Caco-2 (cell line): ENCODE measurements at regions of chr7 and their contacts with region 1.

Region 1: GRCh38 chr7:114138587-114138986 is 219.8 kb upstream of the PPP1R3A start:
- DNase-seq: no peak
- H3K4me3 ChIP-seq: no peak overlapping the region
- H3K4me3 Mint-ChIP-seq: no peak overlapping the region
- H3K27ac Mint-ChIP-seq: no peak overlapping the region
- H3K4me1 ChIP-seq: no peaks in the 10 kb centered on the region
- H3K4me1 Mint-ChIP-seq: no peaks in the 10 kb centered on the region
- H3K27me3 ChIP-seq: no peaks in the 10 kb centered on the region
- H3K27me3 Mint-ChIP-seq: peaks cover 3% of the 10 kb centered on the region
- CTCF ChIP-seq: no peak

Region 2: GRCh38 chr7:113636727-113637421 is 501.7 kb before region 1 on chr7:
- CTCF ChIA-PET with region 1: no interaction called
- POLR2A ChIA-PET with region 1: no interaction called
- intact Hi-C with region 1: no loop called
- DNase-seq: no peak
- H3K4me3 ChIP-seq: no peak overlapping the region
- H3K4me3 Mint-ChIP-seq: no peak overlapping the region
- H3K27ac Mint-ChIP-seq: no peak overlapping the region
- H3K4me1 ChIP-seq: no peaks in the 10 kb centered on the region
- H3K4me1 Mint-ChIP-seq: no peaks in the 10 kb centered on the region
- H3K27me3 ChIP-seq: no peaks in the 10 kb centered on the region
- H3K27me3 Mint-ChIP-seq: no peaks in the 10 kb centered on the region
- CTCF ChIP-seq: no peak

Region 3: DNA sequence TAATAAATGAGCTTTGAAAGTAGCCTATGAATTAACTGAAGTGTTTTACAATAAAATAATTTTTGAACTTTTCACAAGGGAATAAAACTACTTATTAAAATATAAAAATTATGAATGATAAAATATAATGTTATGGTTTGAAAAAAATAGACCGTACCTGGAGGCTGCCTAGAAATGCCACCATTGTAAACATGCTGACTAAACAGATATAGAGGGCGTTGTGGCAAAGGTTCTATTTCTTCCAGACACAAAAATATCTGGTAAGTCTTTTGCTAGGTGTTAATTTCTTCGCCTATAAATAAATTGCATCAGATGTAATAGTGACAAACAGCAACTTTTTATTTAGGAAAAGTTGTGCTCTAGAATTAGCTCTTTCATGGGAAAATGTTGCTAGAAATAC is 231.0 kb before region 1 on chr7:
- CTCF ChIA-PET with region 1: no interaction called
- POLR2A ChIA-PET with region 1: no interaction called
- intact Hi-C with region 1: no loop called
- DNase-seq: no peak
- H3K4me3 ChIP-seq: no peak overlapping the region
- H3K4me3 Mint-ChIP-seq: no peak overlapping the region
- H3K27ac Mint-ChIP-seq: no peak overlapping the region
- H3K4me1 ChIP-seq: no peaks in the 10 kb centered on the region
- H3K4me1 Mint-ChIP-seq: no peaks in the 10 kb centered on the region
- H3K27me3 ChIP-seq: no peaks in the 10 kb centered on the region
- H3K27me3 Mint-ChIP-seq: no peaks in the 10 kb centered on the region
- CTCF ChIP-seq: no peak

Region 4: DNA sequence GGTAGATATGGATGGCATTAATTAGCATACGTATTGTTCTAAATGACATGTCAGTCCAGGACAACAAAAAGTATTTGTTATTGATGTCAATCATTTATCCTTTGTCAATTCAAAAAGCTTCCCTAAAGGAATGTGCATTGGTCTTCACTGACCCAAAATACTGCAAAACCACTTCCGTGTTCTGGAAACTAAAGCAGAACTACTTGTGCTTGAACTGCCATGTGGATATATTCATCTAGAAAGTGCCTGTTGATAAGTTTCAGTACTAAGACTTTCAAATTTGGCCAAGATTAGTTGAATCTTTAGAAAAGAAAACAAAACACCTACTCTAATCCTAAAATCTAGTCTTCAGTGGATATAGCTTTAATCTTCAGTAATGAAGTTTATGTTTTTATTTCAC is 22.3 kb after region 1 on chr7:
- CTCF ChIA-PET with region 1: no interaction called
- POLR2A ChIA-PET with region 1: no interaction called
- intact Hi-C with region 1: no loop called
- DNase-seq: no peak
- H3K4me3 ChIP-seq: no peak overlapping the region
- H3K4me3 Mint-ChIP-seq: no peak overlapping the region
- H3K27ac Mint-ChIP-seq: no peak overlapping the region
- H3K4me1 ChIP-seq: no peaks in the 10 kb centered on the region
- H3K4me1 Mint-ChIP-seq: no peaks in the 10 kb centered on the region
- H3K27me3 ChIP-seq: no peaks in the 10 kb centered on the region
- H3K27me3 Mint-ChIP-seq: no peaks in the 10 kb centered on the region
- CTCF ChIP-seq: no peak

Region 5: DNA sequence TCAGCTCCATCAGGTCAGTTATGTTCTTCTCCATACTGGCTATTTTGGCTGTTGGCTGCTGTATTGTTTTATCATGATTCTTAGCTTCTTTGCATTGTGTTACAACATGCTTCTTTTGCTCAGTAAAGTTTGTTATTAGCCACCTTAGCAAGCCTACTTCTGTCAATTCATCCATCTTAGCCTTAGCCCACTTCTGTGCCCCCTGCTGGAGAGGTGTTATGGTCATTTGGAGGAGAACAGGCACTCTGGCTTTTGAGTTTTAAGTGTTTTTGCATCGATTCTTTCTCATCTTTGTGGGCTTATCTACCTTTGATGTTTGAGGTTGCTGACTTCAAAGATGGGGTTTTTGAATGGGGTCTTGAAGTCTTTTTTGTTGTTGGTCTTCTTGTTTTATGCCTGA is 71.4 kb after region 1 on chr7:
- CTCF ChIA-PET with region 1: no interaction called
- POLR2A ChIA-PET with region 1: no interaction called
- intact Hi-C with region 1: loop called (anchors 5 kb)
- DNase-seq: peak in 1 of 2 experiments; percentile 4
- H3K4me3 ChIP-seq: no peak overlapping the region
- H3K4me3 Mint-ChIP-seq: no peak overlapping the region
- H3K27ac Mint-ChIP-seq: no peak overlapping the region
- H3K4me1 ChIP-seq: no peaks in the 10 kb centered on the region
- H3K4me1 Mint-ChIP-seq: no peaks in the 10 kb centered on the region
- H3K27me3 ChIP-seq: no peaks in the 10 kb centered on the region
- H3K27me3 Mint-ChIP-seq: no peaks in the 10 kb centered on the region
- CTCF ChIP-seq: no peak

Region 6: DNA sequence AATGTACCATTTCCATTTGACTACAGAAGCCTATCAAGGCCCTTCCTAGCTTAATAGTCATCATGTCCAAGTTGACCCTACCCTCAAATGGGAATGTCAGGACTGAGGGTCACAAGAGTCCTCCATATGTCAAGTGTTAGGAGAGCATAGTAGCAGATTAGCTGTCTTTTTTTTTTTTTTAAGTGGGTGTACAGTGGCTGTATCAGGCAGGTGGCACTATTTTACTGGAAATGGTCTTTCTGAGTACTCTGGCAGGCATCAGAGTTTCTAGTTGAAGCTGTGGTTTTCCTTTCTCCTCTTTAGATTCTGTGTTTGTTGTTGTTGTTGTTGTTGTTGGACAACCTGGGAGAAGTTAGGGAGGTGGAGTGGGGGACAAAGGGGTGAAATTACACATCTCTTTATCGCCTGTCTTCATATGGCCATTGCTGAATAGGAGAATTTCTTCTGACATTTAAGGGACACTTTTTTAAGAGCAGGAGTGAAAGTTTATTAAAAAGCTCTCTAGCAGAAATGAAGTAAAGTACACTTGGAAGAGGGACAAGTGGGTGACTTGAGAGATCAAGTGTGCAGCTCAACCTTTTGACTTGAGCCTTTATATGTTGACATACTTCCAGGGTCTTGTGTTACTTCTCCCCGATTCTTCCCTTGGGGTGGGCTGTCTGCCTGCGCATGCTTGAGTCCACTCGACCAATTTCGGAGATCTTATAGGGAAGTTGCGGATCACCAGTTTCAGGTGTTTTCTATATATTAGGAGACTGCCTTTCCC is 171.9 kb after region 1 on chr7:
- CTCF ChIA-PET with region 1: no interaction called
- POLR2A ChIA-PET with region 1: no interaction called
- intact Hi-C with region 1: no loop called
- DNase-seq: no peak
- H3K4me3 ChIP-seq: no peak overlapping the region
- H3K4me3 Mint-ChIP-seq: no peak overlapping the region
- H3K27ac Mint-ChIP-seq: no peak overlapping the region
- H3K4me1 ChIP-seq: no peaks in the 10 kb centered on the region
- H3K4me1 Mint-ChIP-seq: no peaks in the 10 kb centered on the region
- H3K27me3 ChIP-seq: no peaks in the 10 kb centered on the region
- H3K27me3 Mint-ChIP-seq: no peaks in the 10 kb centered on the region
- CTCF ChIP-seq: no peak